Activated CD4-positive, alpha-beta memory T cell treated with anti-CD3 and anti-CD28 coated beads, Interleukin-2, amount 10 ng/mL, durations not matched to agents 7 days and 5 days (primary cell): ENCODE measurements at regions of chr9 and their contacts with region 1.

Region 1: DNA sequence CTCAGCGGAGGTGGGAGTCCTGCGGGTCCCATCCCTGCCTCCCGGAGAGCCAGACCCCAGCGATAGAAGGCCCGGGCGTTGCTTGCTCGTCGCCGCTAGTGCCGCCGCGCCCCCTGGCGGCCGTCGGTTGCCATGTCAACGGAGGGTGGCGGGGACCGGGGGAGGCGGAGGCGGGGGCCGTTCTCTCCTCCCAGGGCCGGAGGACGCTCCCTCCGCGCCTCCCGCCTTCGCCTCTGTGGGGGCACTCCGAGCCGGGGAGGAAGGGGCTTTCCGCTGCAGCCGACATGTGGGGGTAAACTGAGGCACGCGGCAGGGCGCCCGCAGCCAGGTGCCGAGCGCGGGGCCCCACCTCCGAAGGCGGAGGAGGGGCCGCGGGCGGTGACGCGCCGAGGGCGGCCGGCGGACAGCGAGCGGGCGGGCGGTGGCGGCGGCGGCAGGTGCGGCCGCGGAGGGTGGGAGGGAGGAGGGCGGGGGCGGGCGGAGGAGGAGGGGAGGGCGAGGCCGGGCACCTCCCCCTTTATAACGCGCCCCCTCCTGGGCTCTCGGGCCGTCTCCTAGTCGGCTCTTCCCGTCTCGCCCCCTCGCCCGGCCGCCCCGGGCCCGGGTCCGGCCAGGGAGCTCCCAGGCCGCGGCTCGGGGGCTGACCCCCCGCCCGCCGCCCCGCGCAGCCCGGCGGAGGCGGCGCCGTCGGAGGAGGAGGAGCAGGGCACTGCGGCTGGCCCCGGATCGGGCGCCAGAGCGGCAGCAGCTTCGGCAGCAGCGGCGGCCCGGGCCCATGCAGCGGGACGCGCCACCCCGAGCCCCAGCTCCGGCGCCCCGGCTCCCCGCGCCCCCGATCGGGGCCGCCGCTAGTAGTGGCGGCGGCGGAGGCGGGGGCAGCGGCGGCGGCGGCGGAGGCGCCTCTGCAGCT is 556 bp upstream of the CDK9 start:
- DNase-seq: peak; percentile 93
- H3K4me3 Mint-ChIP-seq: peak overlapping the region; percentile 97
- H3K27ac Mint-ChIP-seq: peak overlapping the region; percentile 93
- H3K4me1 Mint-ChIP-seq: peaks cover 78% of the 10 kb centered on the region
- H3K27me3 Mint-ChIP-seq: no peaks in the 10 kb centered on the region

Region 2: DNA sequence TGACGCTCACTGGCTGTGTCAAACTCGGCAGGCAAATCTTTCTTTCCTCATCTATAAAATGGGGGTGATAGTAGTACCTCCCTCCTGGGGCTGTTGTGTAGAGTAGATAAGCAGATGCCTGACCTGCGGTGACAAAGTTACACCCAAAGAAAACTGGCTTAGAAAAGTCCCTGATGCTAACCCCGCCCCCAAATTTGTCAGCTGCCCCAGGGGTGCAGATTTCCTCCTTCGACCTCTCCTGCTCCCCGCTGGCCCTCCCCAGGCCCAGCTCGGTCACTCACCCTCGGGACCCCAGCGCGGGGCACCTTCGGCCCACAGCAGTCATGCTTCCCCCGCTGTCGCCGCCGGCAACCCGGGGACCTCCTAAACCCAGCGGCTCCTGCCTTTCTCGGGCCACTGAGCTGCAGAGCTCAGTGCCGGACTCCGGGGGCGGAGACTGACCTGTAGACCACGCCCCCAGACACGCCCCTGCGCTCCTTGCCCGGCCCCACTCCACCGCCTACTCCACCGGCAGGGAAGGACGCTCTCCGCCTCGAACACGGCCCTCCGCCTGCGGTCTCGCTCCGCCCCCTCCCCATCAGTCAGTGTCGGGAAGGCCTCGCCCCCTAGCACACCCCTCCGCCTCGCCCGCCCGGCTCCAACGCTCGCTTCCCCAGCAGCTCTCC is 14.2 kb before region 1 on chr9:
- CTCF ChIA-PET with region 1: interaction called, 90 read pairs
- POLR2A ChIA-PET with region 1: interaction called, 77 read pairs
- DNase-seq: peak; percentile 98
- H3K4me3 Mint-ChIP-seq: peak overlapping the region; percentile 86
- H3K27ac Mint-ChIP-seq: peak overlapping the region; percentile 89
- H3K4me1 Mint-ChIP-seq: peaks cover 81% of the 10 kb centered on the region
- H3K27me3 Mint-ChIP-seq: no peaks in the 10 kb centered on the region

Region 3: DNA sequence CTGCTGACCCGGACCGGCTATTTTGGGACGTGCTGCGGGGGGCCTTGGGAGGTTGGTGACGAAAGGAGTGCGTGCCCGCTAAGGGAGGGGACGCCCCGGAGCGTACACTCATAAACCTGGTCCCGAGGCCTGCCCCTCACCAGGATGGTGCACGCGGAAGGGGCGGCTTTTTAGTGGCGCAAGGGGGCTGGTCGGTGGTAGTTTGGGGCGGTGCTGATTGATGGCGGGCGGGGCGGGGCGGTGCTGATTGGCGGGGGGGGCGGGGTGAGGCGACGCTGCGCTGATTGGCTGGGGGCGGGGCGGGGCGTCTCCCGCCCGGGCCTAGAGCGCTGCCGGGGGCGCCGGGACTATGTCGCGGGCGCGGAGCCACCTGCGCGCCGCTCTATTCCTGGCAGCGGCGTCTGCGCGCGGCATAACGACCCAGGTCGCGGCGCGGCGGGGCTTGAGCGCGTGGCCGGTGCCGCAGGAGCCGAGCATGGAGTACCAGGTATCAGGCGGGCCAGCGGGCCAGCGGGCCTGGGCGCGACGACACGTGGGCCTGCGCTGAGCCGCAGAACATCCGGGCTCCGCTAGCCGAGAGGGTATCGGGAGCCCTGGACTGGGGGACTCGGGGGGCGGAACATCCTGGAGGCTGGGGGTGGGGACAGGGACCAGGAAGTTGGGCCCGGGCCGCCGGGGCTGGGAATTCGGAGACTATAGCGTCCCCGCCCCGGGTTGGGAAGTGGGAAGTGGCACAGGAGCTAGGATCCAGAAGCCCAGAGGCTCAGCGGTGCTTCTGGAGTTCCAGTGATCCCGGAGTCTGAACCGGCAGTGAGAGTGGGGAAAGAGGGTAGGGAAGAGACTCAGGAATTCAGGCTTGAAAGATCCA is 17.5 kb after region 1 on chr9 and contains the start of gene FPGS:
- CTCF ChIA-PET with region 1: interaction called, 4 read pairs
- POLR2A ChIA-PET with region 1: interaction called, 44 read pairs
- DNase-seq: peak; percentile 85
- H3K4me3 Mint-ChIP-seq: peak within 1 kb of the TSS; percentile 93
- H3K27ac Mint-ChIP-seq: peak within 1 kb of the TSS; percentile 92
- H3K4me1 Mint-ChIP-seq: peaks cover 32% of the 10 kb centered on the region
- H3K27me3 Mint-ChIP-seq: no peaks in the 10 kb centered on the region
- total RNA-seq, gene FPGS: 65.6 to 65.8 TPM

Region 4: GRCh38 chr9:127825319-127826051 is 40.2 kb after region 1 on chr9:
- CTCF ChIA-PET with region 1: no interaction called
- POLR2A ChIA-PET with region 1: no interaction called
- DNase-seq: no peak
- H3K4me3 Mint-ChIP-seq: no peak overlapping the region
- H3K27ac Mint-ChIP-seq: no peak overlapping the region
- H3K4me1 Mint-ChIP-seq: no peaks in the 10 kb centered on the region
- H3K27me3 Mint-ChIP-seq: no peaks in the 10 kb centered on the region

Region 5: GRCh38 chr9:127838375-127839078 is 53.2 kb after region 1 on chr9:
- CTCF ChIA-PET with region 1: no interaction called
- POLR2A ChIA-PET with region 1: no interaction called
- DNase-seq: no peak
- H3K4me3 Mint-ChIP-seq: no peak overlapping the region
- H3K27ac Mint-ChIP-seq: no peak overlapping the region
- H3K4me1 Mint-ChIP-seq: no peaks in the 10 kb centered on the region
- H3K27me3 Mint-ChIP-seq: no peaks in the 10 kb centered on the region

Region 6: GRCh38 chr9:127903557-127904475 is 118.5 kb after region 1 on chr9:
- CTCF ChIA-PET with region 1: interaction called, 3 read pairs
- POLR2A ChIA-PET with region 1: interaction called, 15 read pairs
- DNase-seq: peak; percentile 90
- H3K4me3 Mint-ChIP-seq: peak overlapping the region; percentile 95
- H3K27ac Mint-ChIP-seq: peak overlapping the region; percentile 100
- H3K4me1 Mint-ChIP-seq: peaks cover 49% of the 10 kb centered on the region
- H3K27me3 Mint-ChIP-seq: no peaks in the 10 kb centered on the region